ENCODE measurements at regions of chr2 and their contacts with region 1.

Region 1: GRCh38 chr2:144996225-144996795 is 476.4 kb upstream of the ZEB2 start:
- DNase-seq: no peak

Region 2: DNA sequence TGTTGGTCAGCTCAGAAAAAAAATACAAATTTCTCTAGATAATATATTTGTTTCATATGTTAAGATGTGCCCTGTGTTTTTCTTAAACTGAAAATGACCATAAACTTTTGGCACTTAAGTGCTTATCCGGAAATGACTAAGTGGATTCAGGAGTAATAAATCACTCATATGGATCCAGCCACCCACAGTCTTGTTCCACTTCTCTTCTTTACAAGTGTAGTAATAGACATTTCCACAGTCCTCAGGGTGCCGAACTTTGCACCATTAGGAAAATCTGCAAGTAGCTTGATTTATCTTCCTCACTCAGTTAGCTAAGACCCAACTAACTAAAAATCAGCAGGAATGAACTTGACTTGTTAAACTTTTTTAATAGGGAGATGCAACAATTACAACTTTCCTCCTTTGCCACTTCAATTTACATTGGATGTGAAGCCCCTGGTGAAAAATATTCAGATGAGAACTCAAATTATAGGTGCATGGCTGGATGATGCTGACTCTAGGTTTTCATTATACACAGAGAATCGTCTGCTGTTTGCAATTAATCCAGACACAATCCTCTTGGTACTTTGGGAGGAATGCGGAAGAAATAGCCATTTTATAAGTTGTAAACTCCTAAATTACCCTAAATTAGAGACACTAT is 1544.5 kb before region 1 on chr2:
- intact Hi-C with region 1: no loop called
- DNase-seq: no peak

Region 3: GRCh38 chr2:145029873-145030272 is 33.6 kb after region 1 on chr2:
- intact Hi-C with region 1: loop called (anchors 5 kb)
- DNase-seq: no peak

Measured in posterior cingulate gyrus (tissue), 11 donors.